Dorsolateral prefrontal cortex (tissue), 120 donors: ENCODE measurements at regions of chr4 and their contacts with region 1.

Region 1: DNA sequence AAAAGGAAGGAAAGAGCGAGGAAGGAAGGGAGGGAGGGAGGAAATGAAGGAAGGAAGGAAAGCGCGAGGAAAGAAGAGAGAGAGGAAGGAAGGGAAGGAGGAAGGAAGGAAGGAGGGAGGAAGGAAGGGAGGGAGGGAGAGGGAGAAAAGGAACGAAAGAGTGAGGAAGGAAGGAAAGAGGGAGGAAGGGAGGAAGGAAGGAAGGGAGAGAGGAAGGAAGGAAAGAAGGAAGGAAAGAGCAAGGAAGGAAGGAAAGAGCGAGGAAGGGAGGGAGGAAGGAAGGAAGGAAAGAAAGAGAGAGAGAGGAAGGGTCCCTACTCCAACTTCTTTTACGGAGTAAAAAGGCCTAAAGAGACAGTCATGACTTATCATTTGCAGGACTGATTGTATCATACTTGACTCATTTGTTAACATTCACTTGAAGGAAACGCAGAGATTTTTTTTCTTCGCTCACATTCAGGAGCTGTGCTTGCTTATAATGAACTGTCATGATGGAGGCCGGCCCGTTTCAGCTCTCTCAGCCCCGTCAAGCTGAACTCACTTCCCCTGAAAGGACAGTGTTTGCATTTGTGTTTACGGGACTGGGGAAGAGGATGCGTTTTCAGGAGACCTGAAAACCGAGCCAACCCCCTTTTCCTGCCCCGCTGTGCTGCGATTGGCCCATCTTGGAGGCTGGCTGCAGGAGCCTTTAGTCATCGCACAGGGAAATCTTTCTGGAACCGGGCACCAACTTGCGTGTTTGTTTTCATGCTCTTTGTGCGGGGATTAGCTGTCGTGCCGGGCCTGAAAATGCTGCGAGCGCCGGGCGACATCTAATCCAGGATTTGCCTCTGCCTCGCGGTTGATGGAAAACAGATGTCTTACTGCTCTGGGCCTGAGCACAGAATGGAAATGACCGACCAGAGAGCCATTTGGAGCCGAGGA is 17.8 kb downstream of the TRIM2 start:
- DNase-seq: peak; percentile 32 to 83 (median 66)
- H3K4me3 ChIP-seq: peak overlapping the region; percentile 41 to 84 (median 70)
- H3K27ac ChIP-seq: peak overlapping the region; percentile 62 to 97 (median 94)
- H3K27me3 ChIP-seq: no peaks in the 10 kb centered on the region
- CTCF ChIP-seq: no peak

Region 2: DNA sequence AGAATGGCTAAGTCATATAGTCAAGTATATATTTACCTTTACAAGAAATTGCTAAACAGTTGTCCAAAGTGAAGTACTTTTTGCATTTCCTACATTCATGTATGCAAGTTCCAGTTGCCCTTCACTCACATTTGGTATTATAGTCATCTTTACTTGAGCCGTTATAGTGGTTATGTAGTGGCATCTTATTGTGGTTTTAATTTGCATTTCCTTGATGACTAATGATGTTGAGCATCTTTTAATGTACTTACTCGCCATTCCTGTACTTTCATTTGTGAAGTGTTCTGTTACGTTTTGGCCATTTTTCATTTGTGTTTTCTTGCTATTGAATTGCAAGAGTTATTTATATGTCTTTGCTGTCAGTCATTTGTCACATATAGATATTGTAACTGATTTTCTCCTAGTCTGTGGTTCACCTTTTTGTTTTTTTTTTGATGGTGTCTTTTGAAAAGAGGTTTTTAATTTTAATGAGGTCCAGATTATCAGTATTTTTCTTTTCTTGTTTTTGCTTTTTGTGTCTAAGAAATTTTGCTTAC is 414.7 kb before region 1 on chr4:
- intact Hi-C with region 1: no loop called
- DNase-seq: no peak
- H3K4me3 ChIP-seq: no peak overlapping the region
- H3K27ac ChIP-seq: peak overlapping the region in 9 of 59 donors; percentile 11 to 68 (median 28)
- H3K27me3 ChIP-seq: no peaks in the 10 kb centered on the region
- CTCF ChIP-seq: no peak

Region 3: GRCh38 chr4:152956650-152957436 is 265.2 kb before region 1 on chr4:
- intact Hi-C with region 1: no loop called
- DNase-seq: no peak
- H3K4me3 ChIP-seq: no peak overlapping the region
- H3K27ac ChIP-seq: no peak overlapping the region
- H3K27me3 ChIP-seq: no peaks in the 10 kb centered on the region
- CTCF ChIP-seq: no peak

Region 4: GRCh38 chr4:153153339-153153871 is 68.6 kb before region 1 on chr4:
- intact Hi-C with region 1: loop called in 1 of 2 experiments (anchors 2 kb)
- DNase-seq: peak in 9 of 10 donors; percentile 48 to 80 (median 61)
- H3K4me3 ChIP-seq: peak overlapping the region; percentile 52 to 85 (median 71)
- H3K27ac ChIP-seq: peak overlapping the region; percentile 71 to 95 (median 88)
- H3K27me3 ChIP-seq: no peaks in the 10 kb centered on the region
- CTCF ChIP-seq: peak in 27 of 56 donors; percentile 9 to 55 (median 17)

Region 5: GRCh38 chr4:153257151-153257620 is 35.1 kb after region 1 on chr4:
- intact Hi-C with region 1: loop called (anchors 2 to 5 kb)
- DNase-seq: peak; percentile 54 to 91 (median 84)
- H3K4me3 ChIP-seq: peak overlapping the region; percentile 22 to 72 (median 60)
- H3K27ac ChIP-seq: peak overlapping the region in 57 of 59 donors; percentile 15 to 92 (median 78)
- H3K27me3 ChIP-seq: no peaks in the 10 kb centered on the region
- CTCF ChIP-seq: peak in 2 of 56 donors; percentile 10 to 11